ENCODE measurements at regions of chr3 and their contacts with region 1.

Region 1: DNA sequence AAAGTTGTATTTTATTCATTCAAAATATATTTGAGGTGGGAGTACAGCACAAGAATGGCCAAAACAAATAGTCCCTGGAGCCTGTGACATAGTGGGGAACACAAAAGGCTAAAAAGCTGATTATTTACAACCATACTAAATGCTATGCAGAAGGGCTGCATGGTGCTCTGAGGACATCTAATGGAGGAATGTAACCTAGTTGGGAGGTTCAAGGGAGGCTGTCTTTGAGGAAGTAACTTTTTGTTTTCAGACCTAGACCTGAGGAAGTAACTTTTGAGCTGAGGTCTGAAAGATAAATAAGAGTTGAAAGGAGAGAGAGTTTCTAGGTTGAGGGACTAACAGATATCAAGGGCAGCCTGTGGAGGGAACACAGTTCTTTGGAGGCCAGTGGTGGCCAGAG is 34.8 kb upstream of the RASA2 start:
- DNase-seq: no peak
- H3K4me3 ChIP-seq: no peak overlapping the region
- H3K27ac ChIP-seq: no peak overlapping the region
- H3K27me3 ChIP-seq: no peaks in the 10 kb centered on the region
- CTCF ChIP-seq: peak; percentile 82

Region 2: DNA sequence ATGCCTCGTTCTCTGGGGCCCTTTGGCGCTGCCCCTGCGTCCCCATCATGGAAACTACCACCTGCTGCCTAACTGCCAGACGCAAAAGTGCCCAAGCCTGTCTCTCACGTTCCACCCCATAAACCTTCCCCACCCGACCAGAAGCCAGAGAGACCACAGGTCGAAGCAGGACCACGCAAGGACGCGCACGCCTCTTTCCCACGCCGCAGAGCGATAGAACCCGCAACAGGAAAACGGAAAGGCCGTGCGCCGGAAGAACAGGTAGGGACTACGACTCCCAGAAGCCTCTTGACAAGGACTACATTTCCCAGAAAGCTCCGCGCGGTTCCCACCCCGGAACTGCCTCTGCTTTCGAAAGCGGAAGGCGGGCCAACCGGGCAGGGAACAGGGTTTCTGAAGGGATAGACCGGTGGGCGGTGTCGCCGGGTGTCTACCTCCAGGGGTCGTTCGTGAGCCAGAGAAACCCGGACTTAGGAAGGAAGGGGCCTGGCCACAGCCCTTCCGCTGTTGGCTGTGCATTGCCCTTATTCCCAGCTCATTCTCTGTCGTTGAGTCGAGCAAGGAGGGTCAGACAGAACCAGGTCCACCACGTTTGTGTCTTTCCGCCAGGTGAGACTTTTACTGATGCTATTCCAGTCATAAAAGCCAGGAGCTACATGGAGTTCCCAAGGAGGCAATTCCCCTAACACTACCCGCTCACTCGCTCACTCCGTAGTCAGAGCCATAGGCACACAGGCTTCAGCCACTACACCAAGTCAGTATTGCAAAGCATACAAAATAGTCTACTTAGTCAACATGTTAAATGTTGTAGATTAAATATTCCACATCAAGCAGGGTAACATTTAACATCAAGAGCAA is 140.3 kb before region 1 on chr3:
- CTCF ChIA-PET with region 1: interaction called, 328 read pairs
- POLR2A ChIA-PET with region 1: no interaction called
- DNase-seq: peak; percentile 95
- H3K4me3 ChIP-seq: peak overlapping the region; percentile 90
- H3K27ac ChIP-seq: peak overlapping the region; percentile 65
- H3K27me3 ChIP-seq: no peaks in the 10 kb centered on the region
- CTCF ChIP-seq: peak; percentile 76

Region 3: GRCh38 chr3:141360888-141361598 is 91.0 kb before region 1 on chr3:
- CTCF ChIA-PET with region 1: interaction called, 33 read pairs
- POLR2A ChIA-PET with region 1: interaction called, 4 read pairs
- DNase-seq: no peak
- H3K4me3 ChIP-seq: no peak overlapping the region
- H3K27ac ChIP-seq: peak overlapping the region; percentile 57
- H3K27me3 ChIP-seq: no peaks in the 10 kb centered on the region
- CTCF ChIP-seq: peak; percentile 73

Region 4: DNA sequence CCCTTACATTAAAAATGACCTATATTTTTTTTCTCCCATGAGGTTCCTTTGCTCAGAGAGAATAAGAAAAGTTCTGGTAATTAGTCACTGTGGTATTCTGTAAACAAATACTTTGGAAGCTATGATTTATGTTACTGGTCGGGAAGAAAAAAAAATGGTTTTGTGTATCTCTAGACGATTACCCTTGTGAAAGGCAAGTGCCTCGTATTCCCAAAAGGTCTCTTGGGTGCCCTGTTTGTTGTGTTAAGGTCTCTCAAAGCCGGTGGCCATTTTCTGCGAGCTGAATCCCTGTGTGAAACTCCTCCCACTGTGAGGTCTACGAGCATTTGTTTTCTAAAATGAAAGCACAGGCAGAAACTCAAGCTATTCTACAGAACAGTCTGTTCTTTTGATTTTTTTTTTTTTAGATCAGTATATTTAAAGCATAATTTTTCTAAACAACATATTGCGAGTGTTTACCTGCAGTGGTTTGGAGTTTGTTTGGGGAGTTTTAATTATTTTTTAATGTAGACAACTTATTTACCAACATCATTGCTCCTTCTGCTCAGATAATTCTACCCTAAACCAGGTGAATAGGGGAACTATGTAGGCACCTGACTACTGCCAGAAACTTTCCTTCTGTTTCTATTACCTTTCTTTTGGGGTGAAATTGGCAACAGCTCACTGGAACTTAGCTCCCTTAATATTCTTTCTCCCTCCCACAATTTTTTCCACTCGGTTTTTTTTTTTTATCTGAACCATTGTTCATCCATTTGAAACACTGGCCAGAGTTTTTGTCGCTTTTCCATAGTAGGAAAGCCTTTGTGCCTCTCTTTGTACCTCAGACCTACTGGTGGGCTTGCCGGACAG is 39.7 kb before region 1 on chr3:
- CTCF ChIA-PET with region 1: interaction called, 12 read pairs
- POLR2A ChIA-PET with region 1: no interaction called
- DNase-seq: peak; percentile 76
- H3K4me3 ChIP-seq: peak overlapping the region; percentile 24; the same call in 1 of the 2 replicates
- H3K27ac ChIP-seq: peak overlapping the region; percentile 94
- H3K27me3 ChIP-seq: no peaks in the 10 kb centered on the region
- CTCF ChIP-seq: no peak

Region 5: DNA sequence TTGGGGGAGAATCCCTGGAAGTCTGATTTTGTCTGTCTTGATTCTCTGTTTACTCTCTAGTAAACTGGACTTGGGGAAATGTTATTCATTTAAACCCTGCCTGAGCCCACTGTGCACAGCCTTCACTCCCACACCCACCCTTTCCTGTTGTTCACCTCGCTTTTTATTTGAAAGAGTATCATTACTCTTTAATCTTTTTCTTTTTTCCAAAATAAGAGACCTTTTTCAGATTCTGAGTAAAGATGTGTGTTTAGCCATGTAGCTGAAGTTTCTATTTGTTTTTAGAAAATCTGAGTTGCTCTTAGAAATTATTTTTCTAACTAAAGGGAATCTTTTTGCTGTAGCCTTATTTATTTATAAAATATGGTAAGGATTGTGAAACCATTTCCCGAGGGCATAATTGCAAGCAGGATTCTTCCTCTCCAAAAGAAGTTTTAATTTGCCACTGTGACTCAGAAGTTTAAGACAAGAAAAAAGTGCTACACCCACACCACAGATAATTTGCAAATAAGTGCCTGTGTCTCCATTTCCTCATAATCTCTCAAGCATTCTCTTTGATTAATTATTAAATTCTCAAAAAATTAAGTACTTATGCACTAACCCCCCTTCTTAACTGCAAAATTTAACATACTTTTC is 78.2 kb after region 1 on chr3:
- CTCF ChIA-PET with region 1: no interaction called
- POLR2A ChIA-PET with region 1: no interaction called
- DNase-seq: peak; percentile 18
- H3K4me3 ChIP-seq: no peak overlapping the region
- H3K27ac ChIP-seq: peak overlapping the region; percentile 54
- H3K27me3 ChIP-seq: no peaks in the 10 kb centered on the region
- CTCF ChIP-seq: no peak

Region 6: DNA sequence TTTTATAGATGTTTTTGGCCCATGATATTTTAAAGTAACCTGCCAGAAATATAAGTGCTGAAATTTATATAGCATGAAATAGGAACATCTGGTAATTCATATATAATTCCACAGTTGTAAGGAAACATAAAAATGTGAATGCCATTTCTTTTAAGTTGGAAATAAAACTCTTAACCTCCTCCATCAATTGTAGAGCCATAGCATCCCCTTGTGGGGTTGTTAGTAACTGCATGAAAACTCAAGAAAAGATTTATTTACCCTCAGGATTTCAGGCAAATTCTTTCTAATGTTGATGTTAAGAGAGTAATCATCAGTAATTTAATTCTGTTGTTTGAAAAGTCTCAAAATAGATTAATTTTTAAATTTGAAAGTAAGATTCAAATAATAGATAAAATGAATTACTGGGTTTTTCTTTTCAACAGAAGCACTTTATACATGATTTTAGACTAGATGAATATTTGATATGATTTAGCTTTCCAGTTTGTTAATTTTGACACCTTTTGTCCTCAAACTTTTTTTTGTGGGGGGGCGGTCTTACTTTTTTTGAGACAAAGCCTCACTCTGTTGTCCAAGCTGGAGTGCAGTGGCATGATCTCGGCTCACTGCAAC is 109.5 kb after region 1 on chr3:
- CTCF ChIA-PET with region 1: interaction called, 172 read pairs
- POLR2A ChIA-PET with region 1: no interaction called
- DNase-seq: peak; percentile 53
- H3K4me3 ChIP-seq: no peak overlapping the region
- H3K27ac ChIP-seq: no peak overlapping the region
- H3K27me3 ChIP-seq: no peaks in the 10 kb centered on the region
- CTCF ChIP-seq: peak; percentile 100